ENCODE measurements at regions of chr4 and their contacts with region 1.

Region 1: DNA sequence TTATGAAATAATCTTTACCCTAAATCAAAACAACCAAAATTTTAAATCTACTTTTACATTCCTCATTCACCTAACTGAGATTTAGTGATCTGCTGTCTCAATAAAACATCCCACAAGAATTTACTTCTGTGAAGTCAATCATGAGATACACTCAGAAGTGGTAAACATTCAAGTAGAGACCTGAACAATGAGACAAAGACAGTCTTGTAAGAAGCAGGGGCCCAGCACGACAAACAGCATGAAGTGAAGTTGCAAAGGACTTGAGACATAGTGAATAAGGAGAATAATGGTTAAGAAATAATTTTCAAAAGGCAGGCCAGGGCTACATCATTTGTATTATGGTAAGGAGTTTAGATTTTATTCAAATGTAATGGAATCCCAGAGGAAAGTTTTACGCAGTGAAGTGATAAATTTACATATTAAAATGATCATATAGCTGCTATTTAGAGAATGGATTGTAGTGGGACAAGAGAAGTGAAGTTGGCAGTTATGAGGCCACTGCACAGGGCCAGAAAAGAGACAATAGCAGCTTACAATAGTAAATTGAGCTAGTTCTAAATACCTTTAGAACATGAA is 101.9 kb downstream of the MAB21L2 start:
- DNase-seq: no peak
- H3K4me3 ChIP-seq: no peak overlapping the region
- H3K27ac ChIP-seq: no peak overlapping the region
- H3K4me1 ChIP-seq: no peaks in the 10 kb centered on the region
- H3K27me3 ChIP-seq: no peaks in the 10 kb centered on the region
- CTCF ChIP-seq: no peak
- POLR2A ChIP-seq: no peak

Region 2: DNA sequence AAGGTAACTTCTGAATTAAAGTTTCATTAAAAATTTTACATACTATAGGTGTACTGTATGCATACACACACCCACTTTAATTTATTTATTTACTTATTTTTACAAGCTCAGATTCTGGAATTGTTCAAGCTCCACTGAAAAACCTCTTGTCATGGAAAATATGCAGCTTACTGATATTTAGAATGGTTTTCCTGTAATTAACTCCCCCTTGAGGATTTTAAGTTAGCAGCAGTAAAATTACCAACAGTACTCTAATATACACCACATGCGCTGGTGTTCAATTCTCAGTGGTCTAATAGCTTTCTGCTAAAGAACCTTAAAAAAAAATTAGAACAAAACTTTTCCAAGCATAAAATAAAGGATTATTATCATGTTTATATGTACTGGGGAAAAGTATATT is 89.9 kb before region 1 on chr4:
- intact Hi-C with region 1: no loop called
- DNase-seq: no peak
- H3K4me3 ChIP-seq: no peak overlapping the region
- H3K27ac ChIP-seq: no peak overlapping the region
- H3K4me1 ChIP-seq: no peaks in the 10 kb centered on the region
- H3K27me3 ChIP-seq: no peaks in the 10 kb centered on the region
- CTCF ChIP-seq: no peak
- POLR2A ChIP-seq: no peak

Region 3: DNA sequence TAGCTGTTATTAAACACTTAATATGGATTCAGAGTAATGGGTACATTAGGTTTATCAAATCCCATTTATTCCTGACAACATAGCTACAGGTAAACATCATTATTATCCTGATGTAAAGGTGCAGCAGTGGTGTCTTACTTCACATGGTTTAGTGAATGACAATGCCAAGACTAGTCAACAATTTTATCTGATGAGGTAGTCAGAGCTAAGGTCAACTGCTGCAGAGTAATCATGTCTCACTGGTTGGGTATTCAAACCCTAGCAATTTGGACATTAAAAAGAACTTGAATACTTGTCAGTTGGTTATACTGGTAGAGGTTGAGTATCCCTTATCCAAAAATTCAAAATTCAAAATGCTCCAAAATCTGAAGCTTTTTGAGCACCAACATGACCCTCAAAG is 15.7 kb after region 1 on chr4:
- intact Hi-C with region 1: loop called (anchors 1 kb)
- DNase-seq: no peak
- H3K4me3 ChIP-seq: no peak overlapping the region
- H3K27ac ChIP-seq: no peak overlapping the region
- H3K4me1 ChIP-seq: no peaks in the 10 kb centered on the region
- H3K27me3 ChIP-seq: no peaks in the 10 kb centered on the region
- CTCF ChIP-seq: no peak
- POLR2A ChIP-seq: no peak

Region 4: DNA sequence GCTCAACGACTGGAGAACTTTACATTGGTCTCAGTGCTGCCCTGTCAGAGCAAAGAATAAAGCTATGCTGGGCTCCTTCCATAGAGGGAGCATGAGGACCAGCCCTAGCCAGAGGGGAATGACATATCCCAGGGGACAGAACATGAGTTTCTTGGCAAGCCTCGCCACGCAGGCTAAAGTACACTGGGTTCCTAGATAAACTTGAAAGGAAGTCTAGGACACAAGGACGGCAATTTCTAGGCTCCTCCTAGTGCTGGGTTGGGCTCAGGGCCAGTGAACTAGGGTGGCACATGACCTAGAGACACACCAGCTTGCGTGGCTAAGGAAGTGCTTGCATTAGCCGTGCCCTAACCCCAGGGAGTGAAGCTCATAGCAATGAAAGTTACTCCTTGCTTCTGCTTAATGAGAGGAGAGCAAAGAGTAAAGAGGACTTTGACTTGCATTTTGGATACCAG is 39.1 kb after region 1 on chr4:
- intact Hi-C with region 1: no loop called
- DNase-seq: no peak
- H3K4me3 ChIP-seq: no peak overlapping the region
- H3K27ac ChIP-seq: no peak overlapping the region
- H3K4me1 ChIP-seq: peaks cover 9% of the 10 kb centered on the region
- H3K27me3 ChIP-seq: no peaks in the 10 kb centered on the region
- CTCF ChIP-seq: no peak
- POLR2A ChIP-seq: no peak

Measured in vagina (tissue), 2 donors.